Ascending aorta (tissue), 2 donors: ENCODE measurements at regions of chr10 and their contacts with region 1.

Region 1: GRCh38 chr10:103244663-103245271 is 920 bp upstream of the RPEL1 start:
- DNase-seq: peak; percentile 14 to 87
- H3K4me3 ChIP-seq: no peak overlapping the region
- H3K27ac ChIP-seq: no peak overlapping the region
- H3K4me1 ChIP-seq: peaks cover 4 to 11% of the 10 kb centered on the region in 2 donors
- H3K27me3 ChIP-seq: no peaks in the 10 kb centered on the region
- CTCF ChIP-seq: peak; percentile 84 to 92 (median 84)

Region 2: GRCh38 chr10:102917962-102918816 is 326.6 kb before region 1 on chr10 and contains the start of gene CNNM2:
- intact Hi-C with region 1: loop called (anchors 1 kb)
- DNase-seq: peak; percentile 100
- H3K4me3 ChIP-seq: peak within 1 kb of the TSS; percentile 71 to 89
- H3K27ac ChIP-seq: peak within 1 kb of the TSS; percentile 79 to 94
- H3K4me1 ChIP-seq: peaks cover 0 to 7% of the 10 kb centered on the region in 2 donors
- H3K27me3 ChIP-seq: no peaks in the 10 kb centered on the region
- CTCF ChIP-seq: no peak
- total RNA-seq, gene CNNM2: 18.7 TPM

Region 3: GRCh38 chr10:103077491-103078308 is 167.1 kb before region 1 on chr10:
- intact Hi-C with region 1: loop called (anchors 5 kb)
- DNase-seq: no peak
- H3K4me3 ChIP-seq: peak overlapping the region in 1 of 2 donors; percentile 8
- H3K27ac ChIP-seq: peak overlapping the region; percentile 59 to 71
- H3K4me1 ChIP-seq: peaks cover 0 to 11% of the 10 kb centered on the region in 2 donors
- H3K27me3 ChIP-seq: no peaks in the 10 kb centered on the region
- CTCF ChIP-seq: no peak